ENCODE measurements at regions of chr18 and their contacts with region 1.

Region 1: DNA sequence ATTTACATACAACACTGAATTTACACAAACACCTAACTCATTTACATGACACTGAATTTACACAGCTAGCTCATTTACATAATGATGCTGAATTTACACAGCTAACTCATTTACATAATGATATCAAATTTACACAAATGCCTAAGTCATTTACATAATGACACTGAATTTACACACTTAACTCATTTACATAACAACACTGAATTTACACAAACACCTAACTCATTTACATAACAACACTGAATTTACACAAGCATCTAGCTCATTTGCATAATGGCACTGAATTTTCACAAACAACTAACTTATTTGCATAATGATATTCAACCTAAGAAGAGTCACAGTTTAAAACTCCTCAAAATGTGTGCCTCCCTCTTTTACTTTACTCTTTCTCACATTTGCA is 511.7 kb downstream of the GALR1 start:
- DNase-seq: no peak
- H3K4me3 ChIP-seq: no peak overlapping the region
- H3K27ac ChIP-seq: no peak overlapping the region
- H3K4me1 ChIP-seq: peaks cover 0 to 9% (median 6%) of the 10 kb centered on the region in 4 experiments; a peak in 4 of 7 replicates
- H3K27me3 ChIP-seq: no peaks in the 10 kb centered on the region
- CTCF ChIP-seq: no peak
- EP300 ChIP-seq: no peak
- POLR2A ChIP-seq: no peak
- RAD21 ChIP-seq: no peak

Region 2: DNA sequence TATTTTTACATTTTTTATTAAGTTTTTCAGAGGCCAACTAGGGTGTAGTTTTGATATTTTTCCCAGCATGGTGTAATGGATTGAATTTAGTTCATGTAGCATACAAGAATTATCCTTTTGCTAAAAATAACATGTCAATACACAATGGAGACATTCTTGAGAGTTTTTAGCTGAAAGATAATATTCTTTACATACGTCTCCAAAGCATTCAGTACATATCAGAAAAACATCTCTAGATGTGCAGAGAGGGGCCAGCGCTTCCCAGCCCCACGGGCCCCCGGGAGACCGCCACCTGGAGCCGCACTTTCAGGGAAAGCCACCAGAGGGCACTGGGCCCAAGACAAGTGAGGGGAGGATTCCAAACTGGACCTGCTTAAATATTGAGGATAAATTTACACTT is 12.2 kb before region 1 on chr18:
- CTCF ChIA-PET with region 1: interaction called, 14 read pairs
- POLR2A ChIA-PET with region 1: no interaction called
- DNase-seq: peak in 1 of 2 experiments; percentile 85
- H3K4me3 ChIP-seq: no peak overlapping the region
- H3K27ac ChIP-seq: no peak overlapping the region
- H3K4me1 ChIP-seq: peaks cover 0 to 8% (median 5%) of the 10 kb centered on the region in 4 experiments; a peak in 6 of 7 replicates
- H3K27me3 ChIP-seq: no peaks in the 10 kb centered on the region
- CTCF ChIP-seq: peak; percentile 69 to 75 (median 75)
- EP300 ChIP-seq: no peak
- POLR2A ChIP-seq: no peak
- RAD21 ChIP-seq: peak; percentile 75 to 81

Region 3: GRCh38 chr18:77811503-77811902 is 50.2 kb after region 1 on chr18:
- CTCF ChIA-PET with region 1: no interaction called
- POLR2A ChIA-PET with region 1: no interaction called
- DNase-seq: no peak
- H3K4me3 ChIP-seq: no peak overlapping the region
- H3K27ac ChIP-seq: no peak overlapping the region
- H3K4me1 ChIP-seq: no peaks in the 10 kb centered on the region
- H3K27me3 ChIP-seq: no peaks in the 10 kb centered on the region
- CTCF ChIP-seq: no peak
- EP300 ChIP-seq: no peak
- POLR2A ChIP-seq: no peak
- RAD21 ChIP-seq: no peak